Activated naive CD8-positive, alpha-beta T cell treated with anti-CD3 and anti-CD28 coated beads, Interleukin-2, amount 10 ng/mL, durations not matched to agents 7 days and 5 days (primary cell): ENCODE measurements at regions of chr19 and their contacts with region 1.

Region 1: DNA sequence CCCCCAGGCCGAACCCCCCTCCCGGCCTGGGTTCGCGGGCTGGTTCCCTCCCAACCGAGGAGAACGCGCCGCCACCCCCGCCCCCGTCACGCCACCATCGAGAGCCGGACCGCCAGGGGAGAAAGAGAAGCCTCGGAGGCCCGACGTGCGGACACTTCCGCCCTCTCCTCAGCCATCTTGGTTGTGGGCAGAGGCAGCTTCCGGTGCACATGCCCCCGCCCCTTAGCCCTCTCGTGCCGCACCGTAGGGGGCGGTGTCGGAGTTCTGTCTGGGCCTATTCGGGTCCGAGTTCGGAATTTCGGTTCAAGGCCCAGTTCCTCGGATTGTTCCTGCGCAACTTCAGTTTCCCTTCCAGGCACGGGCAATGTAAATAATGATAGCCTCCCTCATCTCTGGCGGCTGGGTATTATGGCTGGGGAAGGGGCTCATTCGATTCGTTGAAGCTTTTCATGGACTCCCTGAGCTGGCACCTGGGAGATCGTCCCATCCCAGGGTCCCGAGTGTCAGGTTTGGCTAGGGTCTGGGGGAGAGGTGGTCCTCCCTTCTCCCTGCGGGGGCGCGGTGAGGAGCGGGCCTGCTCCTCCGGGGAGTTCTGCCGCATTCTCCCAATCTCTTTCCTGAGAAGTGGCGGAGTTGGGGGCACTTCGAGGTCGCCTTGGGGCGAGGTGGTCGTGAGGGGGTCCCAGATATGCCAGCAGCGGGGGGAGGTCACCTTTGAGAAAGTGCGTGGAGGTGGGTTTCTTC is at the starts of genes IER2 and STX10:
- DNase-seq: peak; percentile 91
- ATAC-seq: peak; percentile 47
- H3K4me3 Mint-ChIP-seq: peak within 1 kb of the TSS; percentile 98
- H3K27ac Mint-ChIP-seq: peak within 1 kb of the TSS; percentile 100
- H3K4me1 Mint-ChIP-seq: peaks cover 13% of the 10 kb centered on the region
- H3K27me3 Mint-ChIP-seq: no peaks in the 10 kb centered on the region
- total RNA-seq, gene IER2: 167 to 178 TPM
- total RNA-seq, gene STX10: 67.1 to 69.9 TPM

Region 2: DNA sequence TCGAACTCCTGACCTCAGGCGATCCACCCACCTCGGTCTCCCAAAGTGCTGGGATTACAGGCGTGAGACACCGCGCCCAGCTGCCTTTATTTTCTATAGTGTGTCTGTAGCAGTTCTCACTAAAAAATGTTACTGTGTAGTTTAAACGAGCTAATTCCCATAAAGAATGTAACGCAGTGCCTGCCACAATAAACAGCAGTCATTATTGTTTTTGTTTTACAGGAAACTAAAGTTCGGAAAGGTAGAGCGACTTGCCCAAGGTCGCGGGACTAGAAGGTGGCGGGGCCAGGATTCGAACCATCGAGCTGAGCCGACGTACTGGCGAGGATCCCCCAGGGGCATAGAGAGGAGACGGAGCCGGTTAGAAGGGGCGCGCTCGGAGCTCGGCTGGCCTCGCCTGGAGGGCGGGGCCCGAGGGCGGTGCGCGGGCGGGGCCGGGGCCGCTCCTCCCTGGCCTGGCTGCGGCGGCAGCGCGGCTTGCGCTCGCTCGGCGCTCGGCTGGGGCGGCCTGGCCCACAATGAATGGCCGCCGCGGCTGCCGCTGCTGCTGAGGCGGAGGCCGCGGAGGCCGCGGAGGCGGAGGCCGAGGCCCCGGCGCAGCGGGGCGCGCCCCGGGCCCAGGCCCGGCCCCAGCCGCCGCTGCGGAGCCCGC is 32.5 kb before region 1 on chr19 and contains the start of gene NACC1:
- POLR2A ChIA-PET with region 1: interaction called, 50 read pairs
- DNase-seq: peak; percentile 97
- ATAC-seq: peak; percentile 87
- H3K4me3 Mint-ChIP-seq: peak within 1 kb of the TSS; percentile 92
- H3K27ac Mint-ChIP-seq: peak within 1 kb of the TSS; percentile 92
- H3K4me1 Mint-ChIP-seq: peaks cover 19% of the 10 kb centered on the region
- H3K27me3 Mint-ChIP-seq: no peaks in the 10 kb centered on the region
- total RNA-seq, gene NACC1: 56.3 to 57.2 TPM

Region 3: GRCh38 chr19:13172068-13172896 is 21.9 kb after region 1 on chr19:
- POLR2A ChIA-PET with region 1: interaction called, 267 read pairs
- DNase-seq: peak; percentile 71
- ATAC-seq: peak; percentile 6
- H3K4me3 Mint-ChIP-seq: peak overlapping the region; percentile 85
- H3K27ac Mint-ChIP-seq: peak overlapping the region; percentile 94
- H3K4me1 Mint-ChIP-seq: peaks cover 46% of the 10 kb centered on the region
- H3K27me3 Mint-ChIP-seq: no peaks in the 10 kb centered on the region

Region 4: DNA sequence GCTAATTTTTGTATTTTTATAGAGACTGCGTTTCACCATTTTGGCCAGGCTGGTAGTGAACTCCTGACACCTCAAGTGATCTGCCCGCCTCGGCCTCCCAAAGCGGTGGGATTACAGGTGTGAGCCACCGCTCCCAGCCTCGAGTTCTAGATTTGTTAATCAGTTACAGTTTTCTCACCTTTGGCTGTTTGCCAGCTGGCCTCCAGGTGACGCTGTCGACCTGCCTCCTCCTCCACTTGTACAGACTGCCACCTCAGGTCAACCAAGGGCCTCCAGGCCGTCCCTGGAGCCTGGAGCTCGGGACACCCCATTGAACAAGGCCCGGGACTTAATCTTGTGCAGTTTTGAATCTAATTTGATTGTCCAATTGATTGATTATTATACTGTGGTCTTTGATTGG is 45.3 kb after region 1 on chr19:
- POLR2A ChIA-PET with region 1: interaction called, 11 read pairs
- DNase-seq: peak; percentile 56
- ATAC-seq: peak; percentile 46
- H3K4me3 Mint-ChIP-seq: no peak overlapping the region
- H3K27ac Mint-ChIP-seq: no peak overlapping the region
- H3K4me1 Mint-ChIP-seq: peaks cover 13% of the 10 kb centered on the region
- H3K27me3 Mint-ChIP-seq: no peaks in the 10 kb centered on the region